ENCODE measurements at regions of chr3 and their contacts with region 1.

Region 1: DNA sequence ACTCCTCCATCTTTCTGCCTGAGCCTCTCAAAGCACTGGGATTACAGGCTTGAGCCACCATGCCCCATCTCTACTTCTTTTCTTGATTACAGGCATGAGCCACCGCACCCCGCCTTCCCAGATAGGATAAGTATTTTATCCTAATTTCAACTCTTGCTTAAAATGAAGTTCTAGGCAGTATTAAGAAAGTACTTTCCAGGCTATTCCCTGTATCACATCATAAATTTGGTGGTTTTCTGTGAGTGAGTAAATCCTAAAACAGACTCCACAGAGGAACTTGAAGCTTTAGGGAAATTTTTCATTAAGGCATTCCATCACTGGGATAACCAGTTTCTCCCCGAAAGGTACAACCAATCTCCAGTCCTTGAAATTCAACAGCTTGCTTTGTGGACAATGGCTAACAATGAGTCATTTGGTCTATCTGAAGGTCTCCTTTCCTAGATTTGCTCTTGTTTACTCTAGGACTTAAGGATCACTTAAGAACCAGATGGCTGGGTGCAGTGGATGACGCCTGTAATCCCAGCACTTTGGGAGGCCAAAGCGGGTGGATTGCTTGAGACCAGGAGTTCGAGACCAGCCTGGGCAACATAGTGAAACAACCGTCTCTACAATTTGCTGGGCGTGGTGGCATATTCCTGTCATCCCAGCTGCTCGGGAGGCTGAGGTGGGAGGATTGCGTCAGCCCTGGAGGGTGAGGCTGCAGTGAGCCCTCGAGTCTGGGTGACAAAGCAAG is 49.7 kb upstream of the SKIL start:
- DNase-seq: no peak
- ATAC-seq: no peak
- H3K4me3 ChIP-seq: no peak overlapping the region
- H3K27ac ChIP-seq: no peak overlapping the region
- H3K4me1 ChIP-seq: no peaks in the 10 kb centered on the region
- H3K27me3 ChIP-seq: no peaks in the 10 kb centered on the region

Region 2: GRCh38 chr3:170296703-170297102 is 11.1 kb before region 1 on chr3:
- intact Hi-C with region 1: no loop called
- DNase-seq: no peak
- ATAC-seq: no peak
- H3K4me3 ChIP-seq: no peak overlapping the region
- H3K27ac ChIP-seq: no peak overlapping the region
- H3K4me1 ChIP-seq: no peaks in the 10 kb centered on the region
- H3K27me3 ChIP-seq: no peaks in the 10 kb centered on the region

Region 3: GRCh38 chr3:170357176-170357919 is 49.5 kb after region 1 on chr3 and contains the start of gene SKIL:
- intact Hi-C with region 1: loop called in 2 of 4 experiments (anchors 2 to 5 kb)
- DNase-seq: peak; percentile 99 to 100 (median 99)
- ATAC-seq: peak; percentile 84 to 90
- H3K4me3 ChIP-seq: peak within 1 kb of the TSS; percentile 85
- H3K27ac ChIP-seq: peak within 1 kb of the TSS; percentile 98
- H3K4me1 ChIP-seq: peaks cover 5% of the 10 kb centered on the region
- H3K27me3 ChIP-seq: no peaks in the 10 kb centered on the region
- total RNA-seq, gene SKIL: 31.9 to 59.5 (median 39.1) TPM